ENCODE measurements at regions of chr3 and their contacts with region 1.

Region 1: DNA sequence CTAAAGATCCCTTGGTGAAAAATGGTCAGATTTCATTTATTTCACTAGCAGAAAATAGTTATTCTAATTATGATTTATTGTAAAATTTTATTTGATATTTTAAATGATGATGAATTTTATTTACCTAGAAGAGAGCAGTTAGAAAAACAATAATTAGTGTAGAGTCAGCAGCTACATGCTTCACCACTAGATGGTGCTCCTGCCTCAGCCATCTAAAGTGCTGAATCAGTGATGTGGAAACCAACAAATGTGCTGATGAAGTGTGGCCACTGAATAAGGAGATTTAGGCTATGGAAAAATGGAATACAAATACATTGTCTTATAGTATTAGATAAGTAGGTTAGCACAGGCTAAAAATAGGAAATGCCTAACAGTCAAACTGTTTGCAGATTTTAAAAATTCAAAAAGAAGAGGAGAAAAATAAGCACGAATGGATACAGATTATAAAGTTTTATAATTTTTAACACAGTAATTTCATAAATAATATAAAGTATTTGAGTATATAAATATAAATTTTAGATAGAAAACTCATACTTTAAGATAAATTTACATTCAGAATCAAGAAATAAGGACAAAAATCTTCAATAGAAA is 109.8 kb downstream of the PPP2R3A start:
- H3K4me3 Mint-ChIP-seq: peak overlapping the region; percentile 32
- H3K27ac Mint-ChIP-seq: peak overlapping the region; percentile 70
- H3K4me1 Mint-ChIP-seq: peaks cover 26% of the 10 kb centered on the region
- H3K27me3 Mint-ChIP-seq: no peaks in the 10 kb centered on the region

Region 2: GRCh38 chr3:136093771-136094170 is 18.5 kb after region 1 on chr3:
- intact Hi-C with region 1: no loop called
- H3K4me3 Mint-ChIP-seq: no peak overlapping the region
- H3K27ac Mint-ChIP-seq: no peak overlapping the region
- H3K4me1 Mint-ChIP-seq: no peaks in the 10 kb centered on the region
- H3K27me3 Mint-ChIP-seq: no peaks in the 10 kb centered on the region

Region 3: DNA sequence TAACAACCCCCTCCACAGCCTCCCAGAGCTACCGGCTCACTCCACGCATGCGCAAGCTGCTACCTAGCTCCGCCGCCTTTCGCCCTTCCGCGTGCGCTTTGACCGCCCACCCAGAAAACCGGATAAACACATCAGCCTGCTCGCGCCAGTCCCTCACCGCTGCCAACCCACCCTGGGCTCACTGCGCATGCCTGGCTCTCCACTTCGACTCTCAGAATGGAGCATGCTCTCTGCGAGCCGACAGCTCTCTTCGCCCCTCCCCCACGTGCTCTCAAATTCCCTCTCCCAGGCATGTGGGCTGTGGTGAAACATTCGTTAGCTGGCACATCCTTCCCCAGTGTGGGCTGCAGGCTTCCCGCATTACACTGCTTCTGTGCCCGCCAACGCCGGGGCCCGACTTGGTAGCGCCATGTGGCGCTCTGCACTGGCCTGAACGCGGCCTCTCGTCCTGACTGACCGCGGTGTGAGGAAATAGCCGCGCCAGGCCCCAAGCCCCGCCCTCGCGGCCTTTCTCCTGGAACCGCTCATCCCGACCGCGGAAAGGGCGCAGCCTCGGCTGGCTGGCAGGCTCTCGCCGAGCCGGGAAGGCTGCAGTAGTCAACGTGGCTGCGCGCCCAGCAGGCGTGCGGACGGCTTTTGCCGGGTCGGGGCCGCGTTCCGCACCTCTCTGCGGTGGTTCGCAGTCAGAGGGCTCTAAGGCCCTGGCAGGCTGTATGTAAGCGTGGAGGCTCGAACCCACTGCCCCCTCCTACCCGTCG is 121.3 kb after region 1 on chr3:
- intact Hi-C with region 1: loop called (anchors 10 kb)
- H3K4me3 Mint-ChIP-seq: peak overlapping the region; percentile 91
- H3K27ac Mint-ChIP-seq: peak overlapping the region; percentile 94
- H3K4me1 Mint-ChIP-seq: peaks cover 36% of the 10 kb centered on the region
- H3K27me3 Mint-ChIP-seq: no peaks in the 10 kb centered on the region

Region 4: GRCh38 chr3:136390574-136390973 is 315.3 kb after region 1 on chr3:
- intact Hi-C with region 1: loop called (anchors 5 kb)
- H3K4me3 Mint-ChIP-seq: no peak overlapping the region
- H3K27ac Mint-ChIP-seq: no peak overlapping the region
- H3K4me1 Mint-ChIP-seq: no peaks in the 10 kb centered on the region
- H3K27me3 Mint-ChIP-seq: no peaks in the 10 kb centered on the region

Region 5: GRCh38 chr3:136752422-136753325 is 677.4 kb after region 1 on chr3:
- intact Hi-C with region 1: loop called (anchors 5 kb)
- H3K4me3 Mint-ChIP-seq: peak overlapping the region; percentile 94
- H3K27ac Mint-ChIP-seq: peak overlapping the region; percentile 98
- H3K4me1 Mint-ChIP-seq: peaks cover 49% of the 10 kb centered on the region
- H3K27me3 Mint-ChIP-seq: no peaks in the 10 kb centered on the region

Region 6: GRCh38 chr3:136772709-136773108 is 697.4 kb after region 1 on chr3:
- intact Hi-C with region 1: no loop called
- H3K4me3 Mint-ChIP-seq: no peak overlapping the region
- H3K27ac Mint-ChIP-seq: no peak overlapping the region
- H3K4me1 Mint-ChIP-seq: no peaks in the 10 kb centered on the region
- H3K27me3 Mint-ChIP-seq: no peaks in the 10 kb centered on the region

Region 7: GRCh38 chr3:137105277-137105977 is 1030.1 kb after region 1 on chr3:
- intact Hi-C with region 1: loop called (anchors 10 kb)
- H3K4me3 Mint-ChIP-seq: no peak overlapping the region
- H3K27ac Mint-ChIP-seq: no peak overlapping the region
- H3K4me1 Mint-ChIP-seq: no peaks in the 10 kb centered on the region
- H3K27me3 Mint-ChIP-seq: peaks cover 5% of the 10 kb centered on the region

Region 8: DNA sequence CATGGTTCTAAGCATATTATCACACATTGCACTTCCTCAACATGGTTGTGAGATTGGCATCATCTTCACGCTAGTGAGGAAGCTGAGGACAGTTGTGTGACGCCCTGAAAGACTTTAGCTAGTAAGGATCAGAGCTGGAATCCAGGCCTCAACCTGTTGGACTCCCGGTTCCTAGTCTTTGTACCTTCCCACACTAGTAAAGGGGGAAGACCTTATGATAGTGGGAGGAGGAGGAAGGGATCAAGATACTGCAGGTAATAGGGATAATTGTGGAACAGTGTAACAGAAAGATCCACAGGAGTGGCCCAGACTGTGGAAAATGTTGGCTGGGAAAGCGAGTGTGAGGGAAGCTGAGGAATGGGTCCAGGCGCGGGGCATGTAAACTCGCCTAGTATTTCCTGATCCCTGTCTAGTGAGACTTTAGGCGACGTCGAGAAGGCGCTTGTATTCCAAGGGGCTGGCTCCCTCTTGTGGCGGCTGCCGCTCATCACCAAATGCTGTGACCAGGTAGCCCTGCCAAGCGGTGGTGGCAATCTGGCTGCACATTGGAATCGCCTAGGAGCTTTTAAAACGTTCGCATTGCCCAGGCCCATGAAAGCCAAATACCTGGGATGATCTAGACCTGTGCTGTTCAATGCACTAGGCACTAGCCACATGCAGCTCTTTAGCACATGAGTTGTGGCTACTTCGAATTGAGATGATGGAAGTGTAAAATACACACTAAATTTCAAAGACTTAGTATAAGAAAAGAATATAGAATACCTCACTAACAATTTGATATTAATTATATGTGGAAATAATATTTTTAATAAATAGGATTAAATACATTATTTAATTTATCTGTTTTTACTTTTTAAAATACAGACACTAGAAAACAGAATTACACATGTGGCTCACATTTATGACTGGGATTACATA is 1895.9 kb after region 1 on chr3:
- intact Hi-C with region 1: loop called (anchors 10 kb)
- H3K4me3 Mint-ChIP-seq: no peak overlapping the region
- H3K27ac Mint-ChIP-seq: no peak overlapping the region
- H3K4me1 Mint-ChIP-seq: peaks cover 5% of the 10 kb centered on the region
- H3K27me3 Mint-ChIP-seq: peaks cover 8% of the 10 kb centered on the region